Activated CD4-positive, alpha-beta memory T cell treated with anti-CD3 and anti-CD28 coated beads for 36 hours (primary cell): ENCODE measurements at regions of chr1 and their contacts with region 1.

Region 1: DNA sequence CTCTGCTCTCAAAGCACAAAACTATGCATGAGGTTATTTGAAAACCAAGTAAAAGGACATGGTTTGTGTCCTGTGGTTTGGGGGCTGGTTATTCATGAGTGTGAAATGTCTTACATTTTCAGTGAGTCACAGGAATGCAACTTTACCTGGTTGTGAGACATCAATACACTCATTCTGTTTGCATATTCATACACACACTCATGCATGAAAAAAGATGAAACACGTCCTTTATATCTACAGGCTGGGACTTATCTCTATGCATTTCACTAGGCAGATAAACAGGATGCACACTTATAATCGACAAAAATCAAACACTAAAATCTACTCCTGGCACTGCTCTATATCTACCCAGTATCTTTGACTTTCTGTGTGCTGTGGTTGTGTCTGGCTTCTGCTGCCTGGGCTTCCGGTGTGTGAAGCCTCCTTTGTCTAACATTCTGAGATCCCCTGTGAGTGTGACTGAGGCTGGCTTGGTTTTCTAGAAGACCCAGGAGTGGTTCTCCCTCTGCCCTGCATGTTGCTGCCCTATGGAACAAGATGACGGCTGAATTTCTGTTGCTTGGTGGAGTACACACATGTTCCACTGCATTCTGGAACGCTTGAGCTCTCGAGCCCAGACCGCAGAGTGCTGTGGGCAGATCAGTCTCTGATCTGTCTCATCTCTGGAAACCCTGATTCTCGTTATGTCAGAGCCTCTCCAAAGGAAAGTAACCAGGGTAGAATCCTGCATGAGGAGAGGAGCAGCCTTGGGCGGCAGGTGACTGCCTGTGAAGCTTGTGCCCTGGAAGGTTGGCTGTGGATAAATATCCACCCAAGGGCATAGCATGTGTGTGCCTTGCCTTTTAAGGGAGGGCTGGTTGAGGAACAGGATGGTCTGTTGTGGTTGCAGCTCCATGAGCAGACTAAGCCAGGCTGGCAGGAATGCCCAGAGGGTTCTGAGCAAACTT is 19.7 kb upstream of the FASLG start:
- DNase-seq: peak; percentile 93
- H3K4me3 Mint-ChIP-seq: peak overlapping the region; percentile 53
- H3K27ac Mint-ChIP-seq: peak overlapping the region; percentile 98
- H3K4me1 Mint-ChIP-seq: peaks cover 71% of the 10 kb centered on the region
- H3K27me3 Mint-ChIP-seq: peaks cover 20% of the 10 kb centered on the region

Region 2: DNA sequence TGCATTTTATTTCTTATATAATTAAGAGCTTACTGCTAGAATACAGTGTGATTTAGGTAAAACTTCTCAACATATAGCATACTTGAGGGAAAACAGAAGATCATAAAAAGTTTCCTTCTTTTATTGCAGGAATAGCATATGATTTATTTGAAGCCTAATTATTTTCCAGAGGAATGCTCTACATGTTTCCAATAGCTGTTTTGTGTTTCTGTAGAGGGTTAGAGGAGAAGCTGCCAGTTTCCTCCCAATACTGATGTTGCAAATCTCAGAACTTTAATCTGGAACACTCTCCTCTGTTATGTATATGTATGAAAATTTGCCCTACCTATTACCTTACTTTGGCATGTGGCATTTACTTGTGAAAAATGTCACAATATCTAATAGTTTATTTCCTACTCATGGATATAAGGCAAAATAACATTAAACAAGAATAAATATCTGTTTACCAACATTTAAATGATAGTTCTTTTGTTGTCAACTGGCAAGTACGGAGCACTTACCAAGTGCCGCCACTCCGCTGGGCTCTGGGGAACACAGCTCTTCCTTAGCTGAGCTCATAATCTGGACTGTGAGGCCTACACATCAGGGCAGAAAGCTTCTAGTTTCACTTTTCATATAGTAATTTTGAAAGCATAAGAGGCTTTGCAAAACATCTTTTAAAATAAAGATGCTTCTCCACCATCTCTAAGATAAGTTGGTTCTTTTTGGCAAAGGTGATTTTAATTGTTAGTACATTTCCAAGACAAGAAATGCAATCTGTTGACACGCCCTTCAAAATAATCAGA is 458.5 kb before region 1 on chr1:
- CTCF ChIA-PET with region 1: no interaction called
- POLR2A ChIA-PET with region 1: no interaction called
- intact Hi-C with region 1: loop called (anchors 2 kb)
- DNase-seq: peak; percentile 66
- H3K4me3 Mint-ChIP-seq: peak overlapping the region; percentile 74
- H3K27ac Mint-ChIP-seq: peak overlapping the region; percentile 95
- H3K4me1 Mint-ChIP-seq: peaks cover 45% of the 10 kb centered on the region
- H3K27me3 Mint-ChIP-seq: no peaks in the 10 kb centered on the region

Region 3: DNA sequence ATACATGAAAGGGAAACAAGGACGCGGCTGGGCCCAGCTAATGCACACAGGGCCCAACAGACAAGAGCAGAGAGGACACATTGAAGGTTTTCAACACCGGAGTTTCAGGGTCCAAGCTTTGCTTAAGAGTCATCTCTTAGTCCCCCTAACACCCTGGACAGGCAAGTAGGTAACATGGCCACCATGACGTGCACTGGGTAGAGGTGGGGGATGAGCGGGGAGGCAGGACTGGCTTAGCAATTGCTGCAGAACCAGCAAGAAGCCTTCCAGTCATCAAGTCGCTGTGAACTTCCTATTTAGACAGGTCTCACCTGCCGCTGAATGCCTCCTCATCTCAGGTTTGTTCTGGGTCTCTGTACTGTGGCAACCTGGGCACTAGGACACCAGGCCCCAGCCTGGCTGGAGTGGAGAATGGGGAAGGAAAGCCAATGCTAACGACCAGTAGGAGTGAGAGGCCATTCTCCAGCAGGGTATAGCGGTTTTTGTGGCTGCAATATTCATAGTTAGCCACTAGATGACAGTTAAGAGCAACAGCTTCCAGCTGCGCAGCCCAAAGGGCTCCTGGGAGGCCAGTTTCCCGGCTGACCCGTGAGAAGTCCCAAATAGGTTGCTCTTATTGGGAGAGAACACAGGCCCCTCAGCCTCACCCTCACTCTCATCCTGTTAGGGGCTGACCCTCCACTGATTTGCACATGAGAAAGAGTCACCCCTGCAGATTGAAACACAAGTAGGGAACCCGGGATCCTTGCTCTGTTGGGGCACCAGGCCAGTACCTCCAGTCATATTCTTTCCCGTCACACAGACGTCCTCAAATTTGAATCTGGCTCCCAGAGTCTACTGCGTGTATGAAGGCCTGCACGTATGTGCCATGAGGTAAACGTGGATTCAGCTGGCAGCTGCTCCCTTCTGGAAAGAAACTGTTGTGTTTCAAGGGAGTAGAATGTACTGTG is 189.3 kb before region 1 on chr1:
- CTCF ChIA-PET with region 1: interaction called, 3 read pairs
- POLR2A ChIA-PET with region 1: no interaction called
- intact Hi-C with region 1: loop called (anchors 1 kb)
- DNase-seq: peak; percentile 47
- H3K4me3 Mint-ChIP-seq: peak overlapping the region; percentile 36
- H3K27ac Mint-ChIP-seq: no peak overlapping the region
- H3K4me1 Mint-ChIP-seq: peaks cover 31% of the 10 kb centered on the region
- H3K27me3 Mint-ChIP-seq: no peaks in the 10 kb centered on the region

Region 4: DNA sequence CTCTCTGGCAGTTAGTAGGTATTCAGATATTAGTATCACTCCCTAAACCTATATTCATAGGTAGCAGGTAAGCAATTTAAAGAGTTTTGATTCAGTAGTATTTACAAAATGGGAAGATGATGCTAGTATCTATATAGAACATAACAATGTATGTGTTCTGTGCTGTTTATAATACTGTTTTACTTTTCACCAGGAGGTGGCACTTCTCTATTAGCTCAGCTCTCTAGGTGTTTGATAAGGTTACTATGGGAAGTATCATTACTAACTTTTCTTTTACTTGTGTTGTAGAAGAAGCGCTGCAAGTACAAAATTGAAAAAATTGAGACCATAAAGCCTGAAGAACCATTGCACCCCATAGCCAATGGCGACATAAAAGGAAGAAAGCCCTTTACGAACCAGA is 29.6 kb before region 1 on chr1:
- CTCF ChIA-PET with region 1: interaction called, 11 read pairs
- POLR2A ChIA-PET with region 1: no interaction called
- intact Hi-C with region 1: no loop called
- DNase-seq: no peak
- H3K4me3 Mint-ChIP-seq: no peak overlapping the region
- H3K27ac Mint-ChIP-seq: no peak overlapping the region
- H3K4me1 Mint-ChIP-seq: peaks cover 6% of the 10 kb centered on the region
- H3K27me3 Mint-ChIP-seq: no peaks in the 10 kb centered on the region

Region 5: GRCh38 chr1:172699111-172699510 is 60.0 kb after region 1 on chr1:
- CTCF ChIA-PET with region 1: no interaction called
- POLR2A ChIA-PET with region 1: interaction called, 8 read pairs
- intact Hi-C with region 1: loop called (anchors 1 kb)
- DNase-seq: peak; percentile 86
- H3K4me3 Mint-ChIP-seq: peak overlapping the region; percentile 14
- H3K27ac Mint-ChIP-seq: peak overlapping the region; percentile 88
- H3K4me1 Mint-ChIP-seq: peaks cover 50% of the 10 kb centered on the region
- H3K27me3 Mint-ChIP-seq: no peaks in the 10 kb centered on the region

Region 6: DNA sequence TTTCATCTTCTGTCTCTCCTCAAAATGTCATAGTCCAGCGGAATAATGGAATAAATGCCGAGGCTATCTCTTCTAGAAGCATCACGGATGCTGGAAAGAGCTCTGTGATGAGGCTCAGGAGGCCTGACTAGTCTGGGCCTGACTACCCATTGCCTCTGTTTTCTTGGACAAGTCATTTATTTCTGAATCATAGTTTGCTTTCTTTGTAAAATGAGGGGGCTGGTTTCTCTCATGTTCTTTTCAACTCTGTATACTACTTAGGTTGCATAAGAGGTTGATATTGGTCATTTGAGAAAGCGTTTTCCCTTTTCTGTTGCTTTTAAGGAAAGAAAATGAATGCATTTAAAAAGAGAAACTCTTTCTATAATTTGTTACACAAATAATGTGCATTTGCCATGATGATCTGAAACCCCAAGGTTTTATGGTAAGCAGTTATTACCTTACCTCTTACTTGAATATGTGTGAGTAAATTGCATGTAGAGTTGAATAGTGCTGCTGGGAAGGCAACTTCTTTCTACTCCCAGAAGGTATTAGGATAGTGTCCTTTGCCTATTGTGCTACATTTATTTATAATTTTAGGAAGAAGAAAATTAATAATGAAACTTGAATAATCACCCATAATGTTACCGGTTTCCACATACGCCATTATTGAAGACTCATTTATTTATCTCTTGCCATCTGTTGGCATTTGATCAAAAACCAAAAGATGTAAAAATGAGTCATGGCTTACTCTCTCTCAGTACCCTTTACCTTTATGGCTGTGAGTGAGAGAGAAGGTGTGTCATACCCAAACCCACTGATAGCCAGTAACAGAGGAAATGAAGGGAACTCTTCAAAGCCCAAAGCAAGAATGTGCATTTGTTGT is 198.9 kb after region 1 on chr1:
- CTCF ChIA-PET with region 1: no interaction called
- POLR2A ChIA-PET with region 1: no interaction called
- intact Hi-C with region 1: loop called (anchors 1 kb)
- DNase-seq: peak; percentile 15
- H3K4me3 Mint-ChIP-seq: no peak overlapping the region
- H3K27ac Mint-ChIP-seq: no peak overlapping the region
- H3K4me1 Mint-ChIP-seq: peaks cover 27% of the 10 kb centered on the region
- H3K27me3 Mint-ChIP-seq: peaks cover 33% of the 10 kb centered on the region